Sigmoid colon (tissue), 7 donors: ENCODE measurements at regions of chr19 and their contacts with region 1.

Region 1: DNA sequence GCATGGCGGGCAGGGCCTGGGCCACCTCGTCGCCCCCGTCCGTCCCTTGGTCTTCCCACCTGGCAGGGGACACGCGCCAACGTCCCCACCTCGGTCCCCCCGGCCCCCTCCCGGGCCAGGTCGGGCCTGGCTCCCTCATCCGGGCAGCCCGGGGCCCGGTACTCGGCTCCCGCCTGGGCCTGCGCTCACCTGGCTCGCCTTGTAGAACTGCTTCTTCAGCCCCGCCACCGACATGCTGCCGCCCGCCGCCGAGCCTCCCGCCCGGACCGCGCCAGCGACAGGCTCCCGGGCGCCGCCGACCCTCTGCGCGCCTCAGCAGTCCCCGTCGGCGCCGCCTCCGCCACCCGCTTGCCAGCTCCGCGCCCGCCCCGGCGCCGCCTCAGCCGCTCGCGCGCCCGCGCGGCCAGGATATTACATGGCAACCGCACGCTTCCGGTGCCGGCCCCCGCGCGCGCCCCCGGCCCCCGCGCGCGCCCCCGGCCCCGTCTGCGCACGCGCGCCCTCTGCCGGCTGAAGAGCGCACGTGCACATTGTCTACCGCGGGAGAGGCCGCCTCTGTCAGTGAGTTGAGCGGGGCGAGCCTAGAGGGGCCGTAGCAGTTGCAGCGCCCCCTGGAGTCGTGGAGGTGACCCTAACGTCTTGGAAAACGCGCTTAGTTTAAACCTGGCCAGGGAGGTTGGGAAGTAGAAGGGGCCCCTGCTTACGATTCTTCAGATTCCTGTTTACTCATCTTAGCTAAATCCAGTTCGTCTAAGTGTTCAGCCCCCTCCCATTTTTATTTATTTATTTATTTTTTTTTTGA is at the start of gene SH3GL1:
- DNase-seq: peak; percentile 98
- H3K4me3 ChIP-seq: peak within 1 kb of the TSS; percentile 91 to 98 (median 96)
- H3K27ac ChIP-seq: peak within 1 kb of the TSS; percentile 94 to 97 (median 96)
- H3K4me1 ChIP-seq: peaks cover 0 to 58% (median 55%) of the 10 kb centered on the region in 4 donors
- H3K27me3 ChIP-seq: no peaks in the 10 kb centered on the region
- CTCF ChIP-seq: peak; percentile 77 to 97 (median 88)
- EP300 ChIP-seq: peak in 1 of 4 donors; percentile 17
- POLR2A ChIP-seq: no peak
- total RNA-seq, gene SH3GL1: 28.5 to 33.9 (median 32.2) TPM

Region 2: DNA sequence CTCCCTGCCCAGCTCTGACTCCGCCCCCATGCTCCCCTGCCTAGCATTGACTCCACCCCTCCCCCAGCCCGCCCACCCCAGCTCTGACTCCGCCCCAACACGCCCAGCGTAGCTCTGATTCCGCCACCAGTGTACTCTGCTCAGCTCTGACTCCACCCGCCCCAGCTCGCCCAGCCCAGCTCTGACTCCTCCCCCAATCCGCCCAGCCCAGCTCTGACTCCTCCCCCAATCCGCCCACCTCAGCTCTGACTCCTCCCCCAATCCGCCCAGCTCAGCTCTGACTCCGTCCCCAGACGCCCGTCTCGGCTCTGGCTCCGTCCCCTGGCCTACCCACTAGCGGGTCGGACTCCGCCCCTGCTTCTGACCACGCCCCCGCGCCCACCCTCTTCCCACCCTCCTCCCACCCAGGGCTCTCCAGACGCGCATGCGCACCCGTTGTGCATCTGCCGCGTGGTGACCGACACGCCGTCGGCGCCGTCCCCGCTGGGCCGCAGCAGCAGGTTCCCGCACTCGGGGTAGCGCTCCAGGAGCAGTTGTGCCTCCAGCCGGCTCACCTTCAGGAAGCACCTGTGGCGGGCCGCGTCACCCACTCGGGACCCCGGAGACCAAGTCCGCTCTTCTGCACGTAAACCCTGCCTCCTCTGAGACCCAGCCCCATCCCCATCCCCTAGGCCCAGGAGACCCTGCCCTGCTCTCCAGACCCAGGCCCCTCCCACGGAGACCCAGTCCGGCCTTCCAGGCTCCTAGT is 71.9 kb before region 1 on chr19:
- intact Hi-C with region 1: loop called (anchors 5 kb)
- DNase-seq: peak; percentile 99
- H3K4me3 ChIP-seq: peak overlapping the region; percentile 21 to 44 (median 33)
- H3K27ac ChIP-seq: peak overlapping the region in 2 of 4 donors; percentile 2 to 60
- H3K4me1 ChIP-seq: peaks cover 0 to 27% (median 20%) of the 10 kb centered on the region in 4 donors
- H3K27me3 ChIP-seq: peaks cover 6 to 38% (median 13%) of the 10 kb centered on the region in 3 donors
- CTCF ChIP-seq: no peak
- EP300 ChIP-seq: no peak
- POLR2A ChIP-seq: no peak

Region 3: GRCh38 chr19:4342615-4343369 is 57.5 kb before region 1 on chr19:
- intact Hi-C with region 1: loop called (anchors 2 kb)
- DNase-seq: peak; percentile 99
- H3K4me3 ChIP-seq: peak overlapping the region; percentile 64 to 90 (median 82)
- H3K27ac ChIP-seq: peak overlapping the region; percentile 95 to 99 (median 96)
- H3K4me1 ChIP-seq: peaks cover 0 to 21% (median 18%) of the 10 kb centered on the region in 4 donors
- H3K27me3 ChIP-seq: no peaks in the 10 kb centered on the region
- CTCF ChIP-seq: peak in 1 of 4 experiments; percentile 21
- EP300 ChIP-seq: no peak
- POLR2A ChIP-seq: peak; percentile 92 to 93